Mammary epithelial cell (primary cell): ENCODE measurements at regions of chr15 and their contacts with region 1.

Region 1: GRCh38 chr15:58793862-58794261 is 22.8 kb downstream of the MINDY2 start:
- DNase-seq: peak; percentile 98
- H3K4me3 ChIP-seq: peak overlapping the region in 2 of 3 experiments; percentile 23 to 31
- H3K27ac ChIP-seq: peak overlapping the region; percentile 99
- H3K4me1 ChIP-seq: peaks cover 16% of the 10 kb centered on the region
- H3K27me3 ChIP-seq: no peaks in the 10 kb centered on the region
- CTCF ChIP-seq: no peak

Region 2: GRCh38 chr15:58717357-58717756 is 76.5 kb before region 1 on chr15:
- CTCF ChIA-PET with region 1: interaction called, 10 read pairs
- dilution Hi-C with region 1: no loop called
- in situ Hi-C with region 1: no loop called
- intact Hi-C with region 1: no loop called
- DNase-seq: no peak
- H3K4me3 ChIP-seq: no peak overlapping the region
- H3K27ac ChIP-seq: no peak overlapping the region
- H3K4me1 ChIP-seq: no peaks in the 10 kb centered on the region
- H3K27me3 ChIP-seq: no peaks in the 10 kb centered on the region
- CTCF ChIP-seq: no peak

Region 3: DNA sequence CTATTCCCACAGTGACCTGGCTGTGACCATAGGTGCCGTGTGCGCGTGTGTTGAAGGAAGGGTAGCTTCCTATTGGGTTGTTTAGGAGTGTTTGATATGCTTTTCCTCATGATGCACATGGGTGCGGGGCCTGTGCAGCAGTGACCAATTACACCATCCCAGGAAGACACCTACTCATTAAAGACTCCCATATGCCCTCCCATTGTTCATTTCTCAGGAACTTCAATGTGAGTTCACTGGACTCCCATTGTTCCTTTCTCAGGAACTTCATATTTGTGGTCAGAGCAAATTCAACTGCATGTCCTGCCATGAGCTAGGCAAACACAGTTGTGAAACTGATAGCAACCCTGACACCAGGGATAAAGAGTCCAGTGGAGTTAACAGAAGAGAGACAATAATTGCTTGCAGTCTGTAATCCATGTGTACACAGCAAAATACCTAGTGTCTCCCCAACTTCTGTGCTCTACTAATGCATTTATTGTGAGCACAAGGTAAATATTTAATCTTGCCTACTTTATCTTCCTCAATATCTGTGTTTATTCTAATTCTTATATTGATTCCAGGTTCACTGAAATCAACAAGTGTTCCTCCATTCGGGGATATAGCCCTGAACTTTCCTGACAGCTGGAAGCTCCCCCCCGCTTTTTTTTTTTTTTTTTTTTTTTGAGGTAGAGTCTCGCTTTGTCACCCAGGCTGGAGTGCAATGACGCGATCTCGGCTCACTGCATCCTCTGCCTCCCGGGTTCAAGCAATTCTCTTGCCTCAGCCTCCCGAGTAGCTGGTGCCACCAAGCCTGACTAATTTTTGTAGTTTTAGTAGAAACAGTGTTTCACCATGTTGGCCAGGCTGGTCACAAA is 760.2 kb after region 1 on chr15:
- CTCF ChIA-PET with region 1: no interaction called
- dilution Hi-C with region 1: no loop called
- in situ Hi-C with region 1: no loop called
- intact Hi-C with region 1: no loop called
- DNase-seq: peak; percentile 97
- H3K4me3 ChIP-seq: no peak overlapping the region
- H3K27ac ChIP-seq: peak overlapping the region; percentile 89
- H3K4me1 ChIP-seq: peaks cover 30% of the 10 kb centered on the region
- H3K27me3 ChIP-seq: no peaks in the 10 kb centered on the region
- CTCF ChIP-seq: no peak